Activated T-helper 1 cell treated with anti-CD3 and anti-CD28 coated beads, Interleukin-12 subunit alpha, Interleukin-12 subunit beta, Interleukin-2, Interleukin-4 antibody, amounts not matched to agents 30 ng/mL and 10 ng/mL and 1 ng/mL, durations not matched to agents 14 hours and 24 hours and 36 hours (primary cell): ENCODE measurements at regions of chr5 and their contacts with region 1.

Region 1: DNA sequence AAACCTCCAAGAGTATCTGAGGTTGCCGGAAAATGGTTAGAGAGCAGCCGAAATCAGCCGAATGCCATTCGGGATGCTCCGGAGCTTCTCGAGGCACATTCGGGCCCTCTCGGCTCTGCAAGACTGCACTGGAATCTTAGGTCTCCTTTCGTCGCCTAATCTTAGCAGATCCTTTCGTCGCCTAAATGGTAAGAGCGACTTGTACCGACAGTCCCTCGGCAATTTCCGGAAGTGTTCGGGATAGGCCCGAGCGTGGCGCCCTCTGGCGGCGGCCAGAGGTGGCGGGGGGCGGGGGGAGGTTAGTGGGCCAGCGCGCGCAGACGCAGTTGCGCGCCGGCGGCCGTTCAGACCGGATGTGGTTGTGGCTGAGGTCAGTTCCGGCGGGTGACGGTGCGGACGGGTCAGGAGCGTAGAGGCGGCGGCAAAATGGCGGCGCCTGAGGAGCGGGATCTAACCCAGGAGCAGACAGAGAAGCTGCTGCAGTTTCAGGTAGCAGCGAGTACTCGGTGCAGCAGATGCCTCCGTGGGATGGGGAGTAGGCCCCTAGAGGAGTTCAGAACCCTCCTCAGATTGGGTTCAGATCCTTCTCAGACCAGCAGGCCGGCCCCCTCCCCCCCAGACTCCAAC is at the start of gene FAF2:
- DNase-seq: peak; percentile 99
- H3K4me3 Mint-ChIP-seq: peak within 1 kb of the TSS; percentile 97
- H3K27ac Mint-ChIP-seq: peak within 1 kb of the TSS; percentile 96
- H3K4me1 Mint-ChIP-seq: peaks cover 40% of the 10 kb centered on the region
- H3K27me3 Mint-ChIP-seq: peaks cover 2% of the 10 kb centered on the region
- total RNA-seq, gene FAF2: 46.0 and 47.3 TPM in 2 replicates

Region 2: GRCh38 chr5:176361437-176362232 is 86.5 kb before region 1 on chr5 and contains the start of gene KIAA1191:
- intact Hi-C with region 1: loop called (anchors 2 kb)
- DNase-seq: peak; percentile 93
- H3K4me3 Mint-ChIP-seq: peak within 1 kb of the TSS; percentile 97
- H3K27ac Mint-ChIP-seq: peak within 1 kb of the TSS; percentile 91
- H3K4me1 Mint-ChIP-seq: peaks cover 36% of the 10 kb centered on the region
- H3K27me3 Mint-ChIP-seq: no peaks in the 10 kb centered on the region
- total RNA-seq, gene KIAA1191: 60.9 and 63.4 TPM in 2 replicates

Region 3: GRCh38 chr5:176436661-176437071 is 11.4 kb before region 1 on chr5:
- intact Hi-C with region 1: loop called (anchors 1 kb)
- DNase-seq: no peak
- H3K4me3 Mint-ChIP-seq: peak overlapping the region; percentile 53
- H3K27ac Mint-ChIP-seq: peak overlapping the region; percentile 20
- H3K4me1 Mint-ChIP-seq: peaks cover 11% of the 10 kb centered on the region
- H3K27me3 Mint-ChIP-seq: peaks cover 4% of the 10 kb centered on the region

Region 4: DNA sequence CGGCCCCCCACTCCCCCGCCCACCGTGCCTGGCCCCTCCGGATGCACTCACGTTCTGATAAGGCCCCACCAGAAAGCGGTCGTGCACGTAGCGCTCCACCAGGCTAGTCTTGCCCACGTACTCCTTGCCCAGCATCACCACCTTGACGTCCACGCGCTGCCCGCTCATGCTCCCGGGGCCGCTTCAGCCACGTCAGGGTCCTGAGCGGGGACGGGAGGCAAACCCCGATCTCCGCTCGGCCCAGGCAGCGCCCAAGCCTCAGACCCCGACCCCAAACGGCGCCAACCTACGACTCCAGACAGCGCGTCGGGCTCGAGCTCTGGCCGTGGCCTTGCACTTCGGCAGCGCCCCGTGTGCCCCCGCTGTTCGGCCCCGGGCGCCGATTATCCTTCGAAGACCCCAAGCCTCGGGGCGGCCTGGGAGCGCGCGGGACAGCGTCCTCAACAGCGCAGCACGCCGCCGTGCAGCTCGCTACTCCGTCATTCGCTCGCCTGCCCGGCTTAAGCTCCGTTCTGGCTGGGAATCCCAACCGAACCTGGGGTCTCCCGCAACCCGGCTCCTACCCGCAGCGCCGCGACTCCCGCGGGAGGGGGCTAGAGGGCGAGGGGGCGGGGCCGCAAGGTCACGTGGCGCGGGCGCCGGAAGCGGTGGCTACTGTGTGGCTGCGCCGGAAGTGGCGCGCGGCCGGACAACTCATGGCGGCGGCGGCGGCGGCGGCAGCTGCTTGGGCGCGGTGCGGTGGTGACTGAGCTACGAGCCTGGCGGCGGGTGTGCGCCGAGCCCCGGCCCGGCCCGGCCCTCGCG is 855.2 kb after region 1 on chr5 and contains the starts of genes PRELID1 and RAB24:
- intact Hi-C with region 1: loop called (anchors 5 kb)
- DNase-seq: peak; percentile 86
- H3K4me3 Mint-ChIP-seq: peak within 1 kb of the TSS; percentile 93
- H3K27ac Mint-ChIP-seq: peak within 1 kb of the TSS; percentile 84
- H3K4me1 Mint-ChIP-seq: peaks cover 75% of the 10 kb centered on the region
- H3K27me3 Mint-ChIP-seq: no peaks in the 10 kb centered on the region
- total RNA-seq, gene PRELID1: 239 and 250 TPM in 2 replicates
- total RNA-seq, gene RAB24: 19.7 and 22.4 TPM in 2 replicates